Heart right ventricle (tissue), 16 donors: ENCODE measurements at regions of chr11 and their contacts with region 1.

Region 1: GRCh38 chr11:29432719-29433325 is 584.0 kb downstream of the KCNA4 start:
- DNase-seq: no peak
- ATAC-seq: no peak
- H3K4me3 ChIP-seq: no peak overlapping the region
- H3K27ac ChIP-seq: no peak overlapping the region
- H3K4me1 ChIP-seq: no peaks in the 10 kb centered on the region
- H3K27me3 ChIP-seq: no peaks in the 10 kb centered on the region
- CTCF ChIP-seq: peak in 8 of 9 donors; percentile 14 to 63 (median 52)

Region 2: DNA sequence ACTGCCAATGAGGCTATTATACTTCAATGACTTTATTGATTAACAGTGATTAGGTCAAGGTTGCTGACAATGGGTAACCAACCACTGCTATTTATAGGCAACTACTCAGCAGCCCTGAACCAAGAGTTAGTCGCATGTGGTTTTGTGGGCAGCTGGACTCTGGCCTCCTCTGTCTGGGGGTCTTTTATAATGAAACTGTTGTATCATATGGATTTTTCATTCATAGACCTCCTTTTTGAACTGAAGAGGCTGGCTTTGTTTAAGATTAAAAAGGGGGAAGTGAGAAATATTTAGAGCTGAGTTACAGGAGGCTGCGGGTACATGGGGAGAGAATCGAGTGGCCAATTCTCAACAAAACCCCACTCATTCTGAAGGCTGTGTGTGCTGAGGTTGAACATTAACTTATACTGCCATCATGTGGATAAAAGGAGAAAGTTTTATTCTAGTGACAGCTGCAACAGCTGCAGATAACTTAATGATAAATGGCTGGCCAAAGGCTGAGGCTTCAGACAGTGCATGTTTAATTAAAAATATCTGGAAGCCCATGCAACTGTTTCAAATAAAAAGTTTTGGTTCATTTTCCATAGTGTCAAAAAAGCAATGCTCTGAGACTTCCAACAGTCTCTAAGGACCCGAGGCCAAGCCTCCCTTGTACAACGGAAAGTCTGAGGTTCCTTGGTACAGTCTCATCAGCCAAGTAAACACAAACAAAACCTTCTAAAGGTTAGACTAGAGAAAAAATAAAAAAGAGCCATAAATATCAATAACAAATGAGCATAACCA is 98.6 kb before region 1 on chr11:
- intact Hi-C with region 1: no loop called
- DNase-seq: no peak
- ATAC-seq: peak in 2 of 8 donors; percentile 38 to 51
- H3K4me3 ChIP-seq: no peak overlapping the region
- H3K27ac ChIP-seq: no peak overlapping the region
- H3K4me1 ChIP-seq: no peaks in the 10 kb centered on the region
- H3K27me3 ChIP-seq: peaks cover 0 to 13% (median 0%) of the 10 kb centered on the region in 7 donors
- CTCF ChIP-seq: peak in 7 of 9 donors; percentile 27 to 56 (median 36)

Region 3: GRCh38 chr11:29482527-29482926 is 49.7 kb after region 1 on chr11:
- intact Hi-C with region 1: no loop called
- DNase-seq: no peak
- ATAC-seq: no peak
- H3K4me3 ChIP-seq: no peak overlapping the region
- H3K27ac ChIP-seq: no peak overlapping the region
- H3K4me1 ChIP-seq: no peaks in the 10 kb centered on the region
- H3K27me3 ChIP-seq: no peaks in the 10 kb centered on the region
- CTCF ChIP-seq: no peak

Region 4: GRCh38 chr11:29518389-29519174 is 85.8 kb after region 1 on chr11:
- intact Hi-C with region 1: no loop called
- DNase-seq: no peak
- ATAC-seq: no peak
- H3K4me3 ChIP-seq: no peak overlapping the region
- H3K27ac ChIP-seq: no peak overlapping the region
- H3K4me1 ChIP-seq: no peaks in the 10 kb centered on the region
- H3K27me3 ChIP-seq: no peaks in the 10 kb centered on the region
- CTCF ChIP-seq: peak in 1 of 9 donors; percentile 26

Region 5: DNA sequence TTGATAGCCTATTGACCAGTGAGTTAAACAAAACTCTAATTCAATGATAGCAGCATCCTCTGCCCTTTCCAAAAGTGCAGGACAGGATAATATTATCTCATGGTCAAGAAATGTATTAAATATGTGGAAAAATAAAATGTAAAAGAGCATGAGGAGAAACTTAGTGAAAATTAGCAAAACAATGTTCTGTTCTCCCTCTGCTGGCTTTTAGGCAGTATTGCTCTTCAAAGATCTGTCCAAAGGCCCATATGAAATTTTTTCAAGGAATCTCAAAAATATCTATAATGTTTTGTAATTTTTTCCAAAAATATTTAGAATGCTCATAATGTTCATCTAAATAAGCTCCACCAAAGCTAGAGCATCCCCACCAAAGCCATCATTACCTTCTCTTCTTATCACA is 881.8 kb after region 1 on chr11:
- intact Hi-C with region 1: loop called in 1 of 10 experiments (anchors 10 kb)
- DNase-seq: no peak
- ATAC-seq: no peak
- H3K4me3 ChIP-seq: no peak overlapping the region
- H3K27ac ChIP-seq: no peak overlapping the region
- H3K4me1 ChIP-seq: no peaks in the 10 kb centered on the region
- H3K27me3 ChIP-seq: peaks cover 0 to 11% (median 0%) of the 10 kb centered on the region in 7 donors
- CTCF ChIP-seq: peak in 8 of 9 donors; percentile 14 to 56 (median 41)

Region 6: DNA sequence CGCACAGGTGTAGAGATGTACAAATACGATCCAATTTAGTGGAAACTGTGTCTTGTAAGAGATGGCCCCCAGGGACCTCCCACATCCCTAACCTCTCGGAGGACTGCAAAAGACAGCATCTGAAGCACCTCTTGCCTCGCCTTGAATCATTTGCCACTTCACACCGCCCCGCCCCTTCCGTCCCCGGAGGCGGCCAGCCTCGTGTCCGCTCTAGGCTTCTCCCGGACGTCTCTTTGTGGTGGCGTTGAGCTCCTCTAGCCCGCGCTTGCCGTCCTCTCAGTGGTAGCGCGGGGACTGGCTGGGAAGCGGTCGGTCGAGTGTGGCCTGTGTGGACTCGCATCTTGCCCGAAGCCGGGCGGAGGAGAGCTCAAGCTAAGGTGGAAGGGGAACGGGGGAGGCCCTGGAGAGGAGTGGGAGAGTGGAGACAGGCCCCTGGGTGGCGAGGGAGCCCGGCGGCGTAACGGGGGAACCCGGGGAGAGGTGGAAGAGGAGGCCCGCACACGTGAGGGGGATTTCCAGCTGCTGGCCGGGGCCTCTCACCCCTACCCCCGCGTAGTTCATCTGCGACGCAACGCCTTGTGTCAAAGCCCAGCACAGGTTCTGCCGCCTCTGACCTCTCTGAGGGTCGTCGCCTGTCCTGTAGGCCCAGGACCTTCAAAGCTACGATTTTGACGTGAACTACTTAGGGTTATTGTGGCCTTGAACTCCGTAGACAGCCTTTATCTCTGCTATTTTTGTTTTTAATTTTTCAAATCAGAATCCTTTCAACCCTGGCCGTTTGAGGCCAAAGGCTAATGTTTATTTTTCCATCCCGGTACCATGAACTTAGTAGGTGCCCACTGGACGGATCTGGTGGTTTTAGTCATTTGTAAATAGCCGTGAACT is 890.2 kb after region 1 on chr11 and contains the start of gene ARL14EP:
- intact Hi-C with region 1: loop called in 3 of 10 experiments (anchors 10 kb)
- DNase-seq: peak; percentile 91 to 92
- ATAC-seq: peak; percentile 99 to 100 (median 100)
- H3K4me3 ChIP-seq: peak within 1 kb of the TSS; percentile 56 to 85 (median 72)
- H3K27ac ChIP-seq: peak within 1 kb of the TSS in 9 of 10 donors; percentile 78 to 96 (median 89)
- H3K4me1 ChIP-seq: peaks cover 3 to 45% (median 37%) of the 10 kb centered on the region in 9 donors
- H3K27me3 ChIP-seq: peaks cover 0 to 15% (median 0%) of the 10 kb centered on the region in 7 donors
- CTCF ChIP-seq: peak in 1 of 9 donors; percentile 15
- total RNA-seq, gene ARL14EP: 28.2 to 43.5 (median 32.3) TPM

Region 7: GRCh38 chr11:30333405-30333804 is 900.6 kb after region 1 on chr11:
- intact Hi-C with region 1: loop called in 3 of 10 experiments (anchors 5 to 10 kb)
- DNase-seq: no peak
- ATAC-seq: peak in 2 of 8 donors; percentile 50 to 69
- H3K4me3 ChIP-seq: no peak overlapping the region
- H3K27ac ChIP-seq: no peak overlapping the region
- H3K4me1 ChIP-seq: peaks cover 0 to 12% (median 5%) of the 10 kb centered on the region in 9 donors
- H3K27me3 ChIP-seq: no peaks in the 10 kb centered on the region
- CTCF ChIP-seq: peak in 7 of 9 donors; percentile 36 to 61 (median 49)